GM13976 (cell line): ENCODE measurements at regions of chr16 and their contacts with region 1.

Region 1: GRCh38 chr16:69150146-69150865 is 17.9 kb downstream of the UTP4 start:
- DNase-seq: peak; percentile 73
- CTCF ChIP-seq: peak; percentile 68

Region 2: GRCh38 chr16:68995011-68995504 is 155.2 kb before region 1 on chr16:
- in situ Hi-C with region 1: no loop called
- DNase-seq: no peak
- CTCF ChIP-seq: no peak

Region 3: DNA sequence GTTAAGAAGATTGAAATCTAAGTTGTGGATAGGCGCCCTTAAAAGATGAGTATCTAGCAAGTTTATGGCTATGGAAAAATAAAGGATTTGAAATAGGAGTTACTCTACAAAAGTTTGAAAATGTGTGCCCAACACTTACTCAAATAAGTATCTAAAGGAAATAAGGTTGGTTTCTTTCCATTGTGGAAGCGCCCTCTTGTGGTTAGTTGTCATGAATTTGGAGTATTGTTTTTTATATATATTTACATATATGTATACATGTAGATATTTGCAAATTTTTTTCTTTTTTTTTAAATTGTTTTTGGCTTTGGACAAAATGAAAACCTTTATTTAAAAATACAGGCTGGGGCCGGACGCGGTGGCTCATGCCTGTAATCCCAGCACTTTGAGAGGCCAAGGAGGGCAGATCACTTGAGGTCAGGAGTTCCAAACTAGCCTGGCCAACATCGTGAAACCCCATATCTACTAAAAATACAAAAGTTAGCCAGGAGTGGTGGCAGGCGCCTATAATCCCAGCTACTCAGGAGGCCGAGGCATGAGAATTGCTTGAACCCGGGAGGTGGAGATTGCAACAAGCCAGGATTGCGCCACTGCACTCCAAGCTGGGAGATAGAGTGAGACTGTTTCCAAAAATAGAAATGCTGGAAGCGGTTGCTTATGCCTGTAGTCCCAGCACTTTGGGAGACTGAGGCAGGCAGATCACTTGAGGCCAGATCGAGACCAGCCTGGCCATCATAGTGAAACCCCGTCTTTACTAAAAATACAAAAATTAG is 136.8 kb after region 1 on chr16:
- in situ Hi-C with region 1: loop called (anchors 10 kb)
- DNase-seq: peak; percentile 57
- CTCF ChIP-seq: peak; percentile 6

Region 4: DNA sequence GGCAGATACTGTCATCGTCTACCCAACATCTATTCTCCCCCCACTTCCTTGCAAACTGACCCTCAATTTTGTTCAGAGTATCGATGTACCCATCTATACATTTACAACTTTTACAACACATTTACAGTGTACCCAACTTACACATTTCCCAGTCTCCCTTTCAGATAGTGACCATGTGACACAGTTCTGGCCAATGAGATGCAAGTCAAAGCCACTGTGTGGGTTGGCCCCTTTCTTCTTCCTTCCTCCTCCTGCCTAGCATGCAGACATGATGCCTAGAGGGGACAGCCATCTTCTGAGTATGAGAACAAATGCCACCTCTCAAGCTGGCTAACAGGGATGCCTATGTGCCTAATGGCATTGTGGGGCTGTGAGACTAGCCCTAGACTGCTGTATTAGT is 404.2 kb after region 1 on chr16:
- in situ Hi-C with region 1: no loop called
- DNase-seq: no peak
- CTCF ChIP-seq: no peak